ENCODE measurements at regions of chr12 and their contacts with region 1.

Region 1: GRCh38 chr12:62934799-62935674 is at the start of gene PPM1H:
- DNase-seq: no peak
- H3K4me3 ChIP-seq: peak within 1 kb of the TSS; percentile 78
- H3K27me3 ChIP-seq: no peaks in the 10 kb centered on the region
- CTCF ChIP-seq: peak; percentile 44
- polyA plus RNA-seq, gene PPM1H: 2.3 and 3.6 TPM in 2 replicates

Region 2: DNA sequence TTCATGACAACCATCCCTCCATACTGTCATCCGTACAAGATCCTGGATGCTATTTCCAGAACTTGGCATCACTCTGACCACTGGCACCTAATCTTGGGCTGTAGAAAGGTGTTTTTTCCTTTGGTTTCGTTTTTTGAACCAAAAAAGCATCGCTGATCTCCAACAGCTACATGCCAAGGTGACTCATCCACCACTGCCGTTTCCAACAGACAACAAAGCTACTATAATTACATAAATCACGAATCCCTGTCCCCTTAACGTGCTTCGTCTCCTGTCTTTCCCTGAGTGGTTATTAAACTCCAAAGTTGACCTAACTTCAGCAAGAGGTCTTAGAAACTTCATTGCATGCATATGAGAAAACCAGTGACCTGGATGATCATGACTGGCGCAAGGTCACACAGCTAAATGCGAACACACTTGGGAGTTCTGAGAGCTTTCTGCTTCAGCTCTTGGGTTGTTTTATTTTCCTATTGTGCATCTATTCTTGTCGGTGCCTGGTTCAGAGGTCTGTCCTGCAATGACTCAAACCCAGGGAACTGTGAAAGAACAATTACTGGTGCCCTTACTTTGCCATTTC is 100.0 kb before region 1 on chr12:
- CTCF ChIA-PET with region 1: no interaction called
- POLR2A ChIA-PET with region 1: no interaction called
- DNase-seq: no peak
- H3K4me3 ChIP-seq: no peak overlapping the region
- H3K27me3 ChIP-seq: no peaks in the 10 kb centered on the region
- CTCF ChIP-seq: no peak

Region 3: GRCh38 chr12:62866451-62867082 is 68.5 kb before region 1 on chr12:
- CTCF ChIA-PET with region 1: interaction called, 11 read pairs
- POLR2A ChIA-PET with region 1: no interaction called
- DNase-seq: peak; percentile 44
- H3K4me3 ChIP-seq: no peak overlapping the region
- H3K27me3 ChIP-seq: no peaks in the 10 kb centered on the region
- CTCF ChIP-seq: no peak

Region 4: DNA sequence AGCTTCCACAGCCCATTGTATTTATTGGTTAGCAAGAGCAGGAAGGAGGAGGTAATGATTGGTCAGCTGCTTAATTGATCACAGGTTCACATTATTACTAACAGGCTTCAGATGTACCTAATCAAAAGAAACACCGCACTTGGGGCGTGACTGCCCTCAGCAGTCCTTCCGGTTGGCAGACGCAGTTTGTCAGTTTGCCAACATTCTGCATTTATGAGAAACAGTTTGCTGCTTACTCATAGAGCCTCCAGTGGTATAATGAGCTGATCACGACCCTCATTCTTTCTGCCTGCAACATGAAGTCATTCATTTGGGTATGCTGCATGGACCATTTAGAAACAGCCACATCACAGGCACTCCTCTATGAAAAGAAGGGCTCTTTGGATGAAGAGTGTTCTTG is 42.4 kb after region 1 on chr12:
- CTCF ChIA-PET with region 1: no interaction called
- POLR2A ChIA-PET with region 1: no interaction called
- DNase-seq: peak; percentile 59
- H3K4me3 ChIP-seq: no peak overlapping the region
- H3K27me3 ChIP-seq: no peaks in the 10 kb centered on the region
- CTCF ChIP-seq: no peak

Region 5: DNA sequence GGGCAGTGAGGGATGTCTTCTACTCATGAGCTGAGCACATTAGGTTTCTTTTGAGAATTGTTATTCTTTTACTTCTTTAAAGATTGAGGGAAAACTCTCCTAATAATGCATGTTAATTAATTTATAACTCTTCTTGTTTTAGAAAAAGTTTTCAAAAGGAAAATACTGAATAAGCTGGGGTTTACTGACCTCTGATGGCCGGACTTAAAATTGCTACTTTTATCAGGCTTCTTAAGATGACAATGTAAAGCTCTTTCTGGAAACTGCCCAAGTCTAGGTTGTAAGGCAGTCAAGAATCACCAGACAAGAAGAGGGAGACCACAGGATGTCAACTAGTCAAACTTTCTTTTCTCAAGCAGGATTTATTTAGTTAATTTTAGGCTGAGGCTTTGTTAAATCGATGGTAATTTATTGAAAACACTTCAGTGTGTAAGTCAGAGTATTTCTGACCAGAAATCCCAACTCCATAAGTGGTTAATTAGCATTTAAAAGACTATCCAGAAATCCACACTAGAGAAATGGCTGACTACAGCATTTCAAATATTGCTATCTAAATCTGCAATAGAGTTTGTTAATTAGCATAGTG is 133.9 kb after region 1 on chr12:
- CTCF ChIA-PET with region 1: interaction called, 23 read pairs
- POLR2A ChIA-PET with region 1: no interaction called
- DNase-seq: no peak
- H3K4me3 ChIP-seq: no peak overlapping the region
- H3K27me3 ChIP-seq: no peaks in the 10 kb centered on the region
- CTCF ChIP-seq: peak; percentile 66

Measured in BJ (cell line).